ENCODE measurements at regions of chrX and their contacts with region 1.

Region 1: DNA sequence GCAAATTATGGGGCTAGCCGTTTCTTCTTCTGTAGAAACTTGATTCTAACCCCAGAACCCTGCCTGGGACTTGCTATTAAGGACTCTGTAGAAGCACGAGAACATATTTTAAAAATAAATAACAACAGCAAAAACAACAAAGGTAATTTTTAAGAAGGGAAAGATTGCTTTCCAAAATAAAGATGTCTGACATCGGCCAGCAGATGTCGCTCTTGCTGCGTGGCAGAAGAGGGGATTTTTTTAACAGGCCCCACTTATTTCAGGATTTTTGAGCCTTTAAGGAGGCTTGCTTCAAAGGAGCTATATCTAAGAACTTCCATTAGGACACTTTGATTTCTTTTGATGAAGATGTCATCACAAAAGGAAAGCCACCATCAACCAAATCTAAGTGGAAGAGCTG is 62.8 kb upstream of the EGFL6 start:
- DNase-seq: peak in 3 of 6 donors; percentile 40 to 65 (median 45)
- ATAC-seq: peak in 1 of 4 donors; percentile 44
- H3K4me3 ChIP-seq: no peak overlapping the region
- H3K27ac ChIP-seq: no peak overlapping the region
- H3K4me1 ChIP-seq: no peaks in the 10 kb centered on the region
- H3K27me3 ChIP-seq: peaks cover 0 to 8% (median 0%) of the 10 kb centered on the region in 4 donors
- CTCF ChIP-seq: peak; percentile 42 to 72 (median 60)

Region 2: DNA sequence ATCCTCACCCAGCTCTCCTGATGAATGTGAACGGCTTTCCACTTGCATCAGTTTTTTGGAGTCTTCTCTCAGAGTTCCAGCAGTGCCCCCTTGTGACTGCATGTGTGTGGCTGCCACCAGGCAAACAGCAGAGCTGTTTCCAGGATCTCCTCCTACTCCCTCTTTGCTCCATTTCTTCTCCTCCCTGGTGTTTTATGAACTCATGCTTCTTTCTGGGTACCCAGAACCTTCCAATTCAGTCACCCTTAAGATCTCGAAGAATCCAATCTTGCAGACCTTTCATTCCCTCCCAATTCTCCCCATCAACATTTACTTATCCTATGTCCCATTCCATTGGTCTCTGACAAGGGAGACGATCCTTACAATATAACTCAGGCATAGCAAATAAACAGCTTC is 139.6 kb after region 1 on chrX:
- intact Hi-C with region 1: loop called in 1 of 3 experiments (anchors 5 kb)
- DNase-seq: peak in 5 of 6 donors; percentile 35 to 67 (median 60)
- ATAC-seq: peak; percentile 61 to 90 (median 86)
- H3K4me3 ChIP-seq: no peak overlapping the region
- H3K27ac ChIP-seq: no peak overlapping the region
- H3K4me1 ChIP-seq: no peaks in the 10 kb centered on the region
- H3K27me3 ChIP-seq: peaks cover 0 to 6% (median 0%) of the 10 kb centered on the region in 4 donors
- CTCF ChIP-seq: peak; percentile 12 to 56 (median 44)

Region 3: GRCh38 chrX:14039344-14039743 is 532.8 kb after region 1 on chrX:
- intact Hi-C with region 1: loop called in 2 of 3 experiments (anchors 5 to 10 kb)
- DNase-seq: peak in 4 of 6 donors; percentile 14 to 59 (median 32)
- ATAC-seq: peak; percentile 60 to 92 (median 89)
- H3K4me3 ChIP-seq: no peak overlapping the region
- H3K27ac ChIP-seq: no peak overlapping the region
- H3K4me1 ChIP-seq: no peaks in the 10 kb centered on the region
- H3K27me3 ChIP-seq: peaks cover 0 to 7% (median 4%) of the 10 kb centered on the region in 4 donors
- CTCF ChIP-seq: peak; percentile 36 to 67 (median 58)